ENCODE measurements at regions of chr11 and their contacts with region 1.

Region 1: GRCh38 chr11:112074026-112074811 is at the start of gene NKAPD1:
- DNase-seq: peak; percentile 63 to 84
- H3K4me3 ChIP-seq: peak within 1 kb of the TSS; percentile 98
- H3K27ac ChIP-seq: peak within 1 kb of the TSS; percentile 82
- H3K4me1 ChIP-seq: peaks cover 18% of the 10 kb centered on the region; the same call in 1 of the 2 replicates
- H3K27me3 ChIP-seq: no peaks in the 10 kb centered on the region
- CTCF ChIP-seq: 0 out of 2 replicates have a peak, but pooled peaks have one; percentile 17
- total RNA-seq, gene NKAPD1: 16.5 and 17.6 TPM in 2 replicates

Region 2: GRCh38 chr11:112024773-112025678 is 49.2 kb before region 1 on chr11 and contains the start of gene DLAT:
- CTCF ChIA-PET with region 1: no interaction called
- POLR2A ChIA-PET with region 1: no interaction called
- intact Hi-C with region 1: loop called (anchors 5 kb)
- DNase-seq: peak; percentile 83 to 85
- H3K4me3 ChIP-seq: peak within 1 kb of the TSS; percentile 86
- H3K27ac ChIP-seq: peak within 1 kb of the TSS; percentile 76
- H3K4me1 ChIP-seq: peaks cover 14% of the 10 kb centered on the region
- H3K27me3 ChIP-seq: no peaks in the 10 kb centered on the region
- CTCF ChIP-seq: no peak
- total RNA-seq, gene DLAT: 27.8 and 44.9 TPM in 2 replicates

Region 3: GRCh38 chr11:112128483-112129121 is 54.4 kb after region 1 on chr11:
- CTCF ChIA-PET with region 1: no interaction called
- POLR2A ChIA-PET with region 1: no interaction called
- intact Hi-C with region 1: no loop called
- DNase-seq: peak; percentile 81 to 91
- H3K4me3 ChIP-seq: no peak overlapping the region
- H3K27ac ChIP-seq: peak overlapping the region; percentile 25; the same call in 1 of the 2 replicates
- H3K4me1 ChIP-seq: peaks cover 24% of the 10 kb centered on the region
- H3K27me3 ChIP-seq: no peaks in the 10 kb centered on the region
- CTCF ChIP-seq: no peak

Measured in PC-9 (cell line).